ENCODE measurements at regions of chr11 and their contacts with region 1.

Region 1: GRCh38 chr11:59660621-59661020 is 8.2 kb downstream of the PATL1 start:
- DNase-seq: no peak
- H3K4me3 ChIP-seq: no peak overlapping the region
- H3K27ac ChIP-seq: peak overlapping the region; percentile 55
- H3K4me1 ChIP-seq: peaks cover 21% of the 10 kb centered on the region
- H3K27me3 ChIP-seq: no peaks in the 10 kb centered on the region
- CTCF ChIP-seq: no peak

Region 2: DNA sequence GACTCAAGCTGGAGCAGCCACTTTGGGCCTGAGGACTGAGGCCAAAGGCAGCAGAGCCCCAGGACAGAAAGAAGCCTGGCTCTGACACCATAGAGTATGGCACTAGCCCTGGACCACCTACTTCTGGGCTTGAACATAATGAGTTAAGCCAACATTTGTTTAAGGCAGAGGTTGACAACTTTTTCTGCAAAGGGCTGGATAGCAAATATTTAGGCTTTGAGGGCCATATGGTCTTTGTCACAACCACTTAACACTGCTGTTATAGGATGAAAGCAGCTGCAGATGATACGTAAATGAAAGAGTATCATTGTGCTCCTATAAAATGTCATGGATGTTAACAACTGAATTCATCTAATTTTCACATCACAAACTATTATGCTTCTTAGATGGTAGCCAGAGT is 61.7 kb before region 1 on chr11:
- CTCF ChIA-PET with region 1: no interaction called
- POLR2A ChIA-PET with region 1: no interaction called
- intact Hi-C with region 1: no loop called
- DNase-seq: no peak
- H3K4me3 ChIP-seq: no peak overlapping the region
- H3K27ac ChIP-seq: no peak overlapping the region
- H3K4me1 ChIP-seq: no peaks in the 10 kb centered on the region
- H3K27me3 ChIP-seq: no peaks in the 10 kb centered on the region
- CTCF ChIP-seq: no peak

Region 3: GRCh38 chr11:59625703-59626102 is 34.9 kb before region 1 on chr11:
- CTCF ChIA-PET with region 1: no interaction called
- POLR2A ChIA-PET with region 1: no interaction called
- intact Hi-C with region 1: loop called (anchors 5 kb)
- DNase-seq: no peak
- H3K4me3 ChIP-seq: no peak overlapping the region
- H3K27ac ChIP-seq: no peak overlapping the region
- H3K4me1 ChIP-seq: peaks cover 8% of the 10 kb centered on the region
- H3K27me3 ChIP-seq: no peaks in the 10 kb centered on the region
- CTCF ChIP-seq: no peak

Region 4: DNA sequence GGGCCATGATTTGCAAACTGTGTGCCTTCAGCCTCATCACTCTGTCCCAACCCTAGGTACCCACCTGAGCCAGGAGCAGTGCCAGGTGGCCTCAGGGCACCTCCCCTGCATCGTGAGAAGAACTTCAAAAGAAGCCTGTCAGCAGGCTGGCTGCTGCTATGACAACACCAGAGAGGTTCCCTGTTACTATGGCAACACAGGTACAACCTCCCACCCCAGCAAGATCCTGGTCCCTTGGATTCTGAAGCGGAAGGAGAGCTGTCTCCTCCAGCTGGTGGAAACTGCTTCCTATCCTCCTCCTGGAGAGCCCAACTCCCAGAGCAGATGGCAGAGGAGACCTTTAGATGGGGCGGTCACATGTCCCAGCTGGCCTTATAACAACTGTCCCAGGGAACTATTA is 1209.7 kb after region 1 on chr11:
- CTCF ChIA-PET with region 1: no interaction called
- POLR2A ChIA-PET with region 1: no interaction called
- intact Hi-C with region 1: no loop called
- DNase-seq: no peak
- H3K4me3 ChIP-seq: no peak overlapping the region
- H3K27ac ChIP-seq: no peak overlapping the region
- H3K4me1 ChIP-seq: no peaks in the 10 kb centered on the region
- H3K27me3 ChIP-seq: no peaks in the 10 kb centered on the region
- CTCF ChIP-seq: no peak